WTC11 (cell line): ENCODE measurements at regions of chr17 and their contacts with region 1.

Region 1: GRCh38 chr17:81394921-81395599 is at the start of gene BAHCC1:
- DNase-seq: peak; percentile 100
- ATAC-seq: peak; percentile 78
- H3K4me3 Mint-ChIP-seq: peak within 1 kb of the TSS; percentile 72
- H3K27ac Mint-ChIP-seq: peak within 1 kb of the TSS; percentile 93
- H3K4me1 Mint-ChIP-seq: peaks cover 34% of the 10 kb centered on the region
- H3K27me3 Mint-ChIP-seq: peaks cover 69% of the 10 kb centered on the region
- CTCF ChIP-seq: no peak
- total RNA-seq, gene BAHCC1: 17.1 to 29.8 TPM (median 21.5 TPM) in 3 replicates

Region 2: GRCh38 chr17:81309070-81309905 is 85.8 kb before region 1 on chr17:
- CTCF ChIA-PET with region 1: interaction called, 16 read pairs
- POLR2A ChIA-PET with region 1: no interaction called
- DNase-seq: peak; percentile 64
- ATAC-seq: peak; percentile 79
- H3K4me3 Mint-ChIP-seq: peak overlapping the region; percentile 27
- H3K27ac Mint-ChIP-seq: peak overlapping the region; percentile 92
- H3K4me1 Mint-ChIP-seq: peaks cover 9% of the 10 kb centered on the region
- H3K27me3 Mint-ChIP-seq: no peaks in the 10 kb centered on the region; the same call in 1 of the 2 replicates
- CTCF ChIP-seq: peak; percentile 29; the same call in 1 of the 2 replicates

Region 3: GRCh38 chr17:81342269-81343070 is 52.6 kb before region 1 on chr17:
- CTCF ChIA-PET with region 1: interaction called, 19 read pairs
- POLR2A ChIA-PET with region 1: interaction called, 12 read pairs
- DNase-seq: peak; percentile 49
- ATAC-seq: peak; percentile 11
- H3K4me3 Mint-ChIP-seq: peak overlapping the region; percentile 90
- H3K27ac Mint-ChIP-seq: peak overlapping the region; percentile 70
- H3K4me1 Mint-ChIP-seq: peaks cover 34% of the 10 kb centered on the region
- H3K27me3 Mint-ChIP-seq: peaks cover 77% of the 10 kb centered on the region
- CTCF ChIP-seq: no peak

Region 4: DNA sequence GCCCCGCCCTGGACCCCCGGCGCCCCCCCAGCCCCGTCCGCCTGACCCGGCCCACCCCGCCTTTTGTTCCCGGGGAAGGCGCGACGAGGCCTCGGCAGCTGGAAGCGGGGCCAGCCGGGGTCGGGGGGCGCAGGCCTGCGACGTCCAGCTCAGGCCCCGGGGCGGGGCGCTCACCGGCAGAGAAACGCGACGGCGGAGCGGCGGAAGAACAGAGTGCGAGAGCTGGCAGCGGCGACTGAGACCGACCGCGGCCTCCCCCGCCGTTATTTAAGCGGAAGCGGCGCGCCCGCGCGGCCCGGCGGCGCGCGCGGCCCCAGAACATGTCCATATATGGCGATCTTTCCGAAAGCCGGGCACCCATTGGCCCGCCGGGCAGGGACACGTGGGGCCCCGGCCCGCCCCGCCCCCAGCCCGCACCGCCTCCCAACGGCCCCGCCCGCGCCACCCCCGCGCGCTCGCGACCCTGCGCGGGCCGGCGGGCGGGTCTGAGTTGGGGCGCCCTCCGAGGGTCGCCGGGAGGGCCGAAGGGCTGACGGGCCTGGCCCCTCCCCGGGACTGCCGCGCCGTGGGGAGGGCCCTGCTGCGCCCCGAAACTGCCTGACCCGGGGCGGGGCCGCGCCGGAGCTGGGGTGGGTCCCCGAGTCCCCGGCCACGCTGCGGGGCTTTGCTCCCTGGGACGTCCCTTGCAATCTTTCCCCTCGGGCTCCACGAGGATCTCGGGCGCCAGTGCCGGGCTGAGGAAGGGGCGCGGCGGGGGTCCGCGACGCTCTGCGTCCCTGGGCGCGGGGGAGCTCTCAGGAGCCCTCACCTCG is 117.7 kb after region 1 on chr17 and contains the start of gene ACTG1:
- CTCF ChIA-PET with region 1: interaction called, 4 read pairs
- POLR2A ChIA-PET with region 1: interaction called, 11 read pairs
- DNase-seq: peak; percentile 88
- ATAC-seq: peak; percentile 6
- H3K4me3 Mint-ChIP-seq: peak within 1 kb of the TSS; percentile 99
- H3K27ac Mint-ChIP-seq: peak within 1 kb of the TSS; percentile 94
- H3K4me1 Mint-ChIP-seq: peaks cover 41% of the 10 kb centered on the region
- H3K27me3 Mint-ChIP-seq: peaks cover 10% of the 10 kb centered on the region; the same call in 1 of the 2 replicates
- CTCF ChIP-seq: no peak
- total RNA-seq, gene ACTG1: 3,338 to 3,455 TPM (median 3,348 TPM) in 3 replicates